AG04450 (cell line): ENCODE measurements at regions of chr6 and their contacts with region 1.

Region 1: DNA sequence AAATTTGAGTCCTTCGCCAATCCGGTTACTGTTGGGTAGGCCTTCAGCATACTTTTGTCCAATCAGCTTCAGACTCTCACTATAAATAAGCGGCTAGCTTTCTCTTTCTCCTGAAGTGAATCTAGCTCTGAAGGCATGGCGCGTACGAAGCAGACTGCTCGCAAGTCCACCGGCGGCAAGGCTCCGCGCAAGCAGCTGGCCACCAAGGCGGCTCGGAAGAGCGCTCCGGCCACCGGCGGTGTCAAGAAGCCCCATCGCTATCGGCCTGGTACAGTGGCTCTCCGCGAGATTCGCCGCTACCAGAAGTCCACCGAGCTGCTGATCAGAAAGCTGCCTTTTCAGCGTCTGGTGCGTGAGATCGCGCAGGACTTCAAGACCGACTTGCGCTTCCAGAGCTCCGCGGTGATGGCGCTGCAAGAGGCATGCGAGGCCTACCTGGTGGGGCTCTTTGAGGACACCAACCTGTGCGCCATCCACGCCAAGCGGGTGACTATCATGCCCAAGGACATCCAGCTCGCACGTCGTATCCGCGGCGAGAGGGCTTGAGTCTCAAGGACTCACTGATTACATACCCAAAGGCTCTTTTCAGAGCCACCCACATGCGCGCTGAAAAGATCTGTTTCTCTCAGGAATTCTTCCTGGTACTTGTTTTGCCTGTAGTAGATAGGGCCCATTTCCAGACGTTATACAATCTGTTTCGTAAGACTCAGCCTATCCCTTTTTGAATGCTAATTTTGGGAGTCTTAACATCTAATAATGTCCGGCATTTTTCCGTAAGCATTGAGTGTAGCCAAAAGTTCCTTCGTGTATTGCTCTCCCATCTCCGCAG is 102.0 kb downstream of the OR2B2 start:
- DNase-seq: peak; percentile 95
- H3K4me3 ChIP-seq: peak overlapping the region; percentile 85
- H3K27ac ChIP-seq: peak overlapping the region; percentile 96
- H3K27me3 ChIP-seq: no peaks in the 10 kb centered on the region
- CTCF ChIP-seq: peak; percentile 24

Region 2: DNA sequence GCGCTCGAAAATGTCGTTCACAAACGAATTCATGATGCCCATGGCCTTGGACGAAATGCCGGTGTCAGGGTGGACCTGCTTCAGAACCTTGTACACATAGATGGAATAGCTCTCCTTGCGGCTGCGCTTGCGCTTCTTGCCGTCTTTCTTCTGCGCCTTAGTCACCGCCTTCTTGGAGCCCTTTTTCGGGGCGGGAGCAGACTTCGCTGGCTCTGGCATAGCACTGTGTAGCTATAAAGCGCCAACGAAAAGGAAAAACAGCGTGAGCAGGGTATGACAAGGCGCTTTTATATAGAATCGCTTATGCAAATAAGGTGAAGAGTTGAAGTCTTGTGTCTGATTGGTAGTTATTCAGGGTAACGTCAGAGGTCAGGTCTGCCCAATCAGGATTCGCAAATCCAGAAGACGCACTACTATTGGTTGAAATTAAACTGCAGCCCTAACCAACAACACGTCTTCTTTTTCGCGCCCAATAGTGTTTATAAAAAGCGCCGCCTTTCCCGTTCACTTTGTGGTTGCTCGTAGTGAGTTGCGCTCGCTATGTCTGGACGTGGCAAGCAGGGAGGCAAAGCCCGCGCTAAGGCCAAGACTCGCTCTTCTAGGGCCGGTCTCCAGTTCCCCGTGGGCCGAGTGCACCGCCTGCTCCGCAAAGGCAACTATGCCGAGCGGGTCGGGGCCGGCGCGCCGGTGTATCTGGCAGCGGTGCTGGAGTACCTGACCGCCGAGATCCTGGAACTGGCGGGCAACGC is 677.4 kb before region 1 on chr6:
- CTCF ChIA-PET with region 1: no interaction called
- POLR2A ChIA-PET with region 1: interaction called, 35 read pairs
- DNase-seq: peak; percentile 100
- H3K4me3 ChIP-seq: peak overlapping the region; percentile 70
- H3K27ac ChIP-seq: peak overlapping the region; percentile 96
- H3K27me3 ChIP-seq: no peaks in the 10 kb centered on the region
- CTCF ChIP-seq: no peak

Region 3: DNA sequence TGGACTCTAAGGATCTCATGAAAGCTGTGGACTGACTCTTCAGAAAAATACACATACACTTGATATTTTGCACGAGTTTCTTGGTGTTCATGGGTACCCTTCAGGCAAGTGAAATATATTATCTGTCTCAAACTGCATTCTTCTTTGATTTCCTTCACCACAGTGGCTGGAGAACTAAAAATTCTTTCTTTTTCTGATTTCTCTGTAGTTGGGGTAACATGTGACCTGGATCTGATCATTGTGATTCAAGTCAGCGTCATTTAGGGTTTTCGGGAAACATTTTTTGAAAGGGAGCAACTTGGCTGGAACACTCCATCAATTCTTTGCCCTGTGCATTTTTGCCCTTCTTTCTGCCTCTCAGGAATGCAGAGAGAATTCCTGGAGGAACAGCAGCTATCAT is 103.7 kb before region 1 on chr6:
- CTCF ChIA-PET with region 1: no interaction called
- POLR2A ChIA-PET with region 1: no interaction called
- DNase-seq: no peak
- H3K4me3 ChIP-seq: no peak overlapping the region
- H3K27ac ChIP-seq: no peak overlapping the region
- H3K27me3 ChIP-seq: no peaks in the 10 kb centered on the region
- CTCF ChIP-seq: no peak

Region 4: GRCh38 chr6:27786048-27786447 is 24.1 kb before region 1 on chr6:
- CTCF ChIA-PET with region 1: no interaction called
- POLR2A ChIA-PET with region 1: no interaction called
- DNase-seq: no peak
- H3K4me3 ChIP-seq: no peak overlapping the region
- H3K27ac ChIP-seq: no peak overlapping the region
- H3K27me3 ChIP-seq: peaks cover 2% of the 10 kb centered on the region
- CTCF ChIP-seq: no peak

Region 5: GRCh38 chr6:27825025-27825793 is 15.1 kb after region 1 on chr6:
- CTCF ChIA-PET with region 1: interaction called, 5 read pairs
- POLR2A ChIA-PET with region 1: interaction called, 37 read pairs
- DNase-seq: no peak
- H3K4me3 ChIP-seq: peak overlapping the region; percentile 80
- H3K27ac ChIP-seq: peak overlapping the region; percentile 82
- H3K27me3 ChIP-seq: no peaks in the 10 kb centered on the region
- CTCF ChIP-seq: no peak

Region 6: GRCh38 chr6:27847706-27848105 is 37.6 kb after region 1 on chr6:
- CTCF ChIA-PET with region 1: no interaction called
- POLR2A ChIA-PET with region 1: interaction called, 10 read pairs
- DNase-seq: no peak
- H3K4me3 ChIP-seq: no peak overlapping the region
- H3K27ac ChIP-seq: no peak overlapping the region
- H3K27me3 ChIP-seq: no peaks in the 10 kb centered on the region
- CTCF ChIP-seq: no peak

Region 7: DNA sequence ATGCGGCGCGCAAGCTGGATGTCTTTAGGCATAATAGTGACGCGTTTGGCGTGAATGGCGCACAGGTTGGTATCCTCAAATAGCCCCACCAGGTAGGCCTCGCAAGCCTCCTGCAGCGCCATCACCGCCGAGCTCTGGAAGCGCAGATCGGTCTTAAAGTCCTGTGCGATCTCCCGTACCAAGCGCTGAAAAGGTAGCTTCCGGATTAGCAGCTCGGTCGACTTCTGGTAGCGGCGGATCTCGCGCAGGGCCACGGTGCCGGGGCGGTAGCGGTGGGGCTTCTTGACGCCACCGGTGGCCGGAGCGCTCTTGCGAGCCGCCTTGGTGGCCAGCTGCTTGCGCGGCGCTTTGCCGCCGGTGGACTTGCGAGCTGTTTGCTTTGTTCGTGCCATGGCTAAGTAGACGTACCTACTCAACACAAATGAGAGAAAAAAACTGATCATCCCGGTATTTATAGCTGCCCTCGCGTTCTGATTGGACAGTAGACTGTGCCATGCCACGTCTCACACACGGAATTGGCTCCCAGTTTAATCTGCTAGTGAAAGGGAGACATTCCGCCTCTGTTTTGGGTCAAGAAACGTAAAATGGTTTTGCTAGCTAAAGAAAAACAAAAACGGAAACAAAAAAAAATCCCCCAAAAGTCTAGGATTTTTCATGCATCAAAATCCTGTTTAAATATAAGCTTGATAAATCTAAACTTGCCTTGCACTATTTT is 61.9 kb after region 1 on chr6:
- CTCF ChIA-PET with region 1: interaction called, 4 read pairs
- POLR2A ChIA-PET with region 1: interaction called, 50 read pairs
- DNase-seq: peak; percentile 96
- H3K4me3 ChIP-seq: peak overlapping the region; percentile 69
- H3K27ac ChIP-seq: peak overlapping the region; percentile 94
- H3K27me3 ChIP-seq: no peaks in the 10 kb centered on the region
- CTCF ChIP-seq: peak; percentile 40; the same call in 1 of the 2 replicates